Dorsolateral prefrontal cortex (tissue), 120 donors: ENCODE measurements at regions of chr1 and their contacts with region 1.

Region 1: DNA sequence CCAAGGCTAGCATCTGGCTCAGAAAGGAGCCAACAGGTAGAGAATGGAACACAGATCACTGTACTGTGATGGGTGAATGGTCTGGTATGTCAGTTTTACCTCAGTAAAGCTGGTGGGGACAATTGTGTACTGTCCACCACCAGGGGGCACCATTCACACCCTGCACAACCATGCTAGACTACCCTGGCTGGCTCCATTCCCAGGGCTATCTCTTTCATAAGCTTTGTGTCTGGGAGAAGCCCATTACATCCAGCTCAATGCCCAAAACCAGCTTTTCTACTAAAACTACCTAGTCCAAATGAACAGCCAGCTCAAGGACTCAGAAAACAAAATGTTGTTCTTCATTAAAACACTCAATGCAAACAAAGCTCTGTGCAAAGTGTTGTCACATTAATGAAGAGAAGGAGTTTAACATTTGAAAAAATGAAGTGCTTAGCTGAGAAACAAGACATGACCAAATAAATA is 62.0 kb upstream of the RASAL2 start:
- DNase-seq: peak; percentile 50 to 93 (median 82)
- H3K4me3 ChIP-seq: no peak overlapping the region
- H3K27ac ChIP-seq: peak overlapping the region in 7 of 59 donors; percentile 8 to 29 (median 21)
- H3K27me3 ChIP-seq: no peaks in the 10 kb centered on the region
- CTCF ChIP-seq: peak; percentile 74 to 94 (median 86)

Region 2: GRCh38 chr1:177729646-177730045 is 302.2 kb before region 1 on chr1:
- intact Hi-C with region 1: no loop called
- DNase-seq: no peak
- H3K4me3 ChIP-seq: no peak overlapping the region
- H3K27ac ChIP-seq: no peak overlapping the region
- H3K27me3 ChIP-seq: no peaks in the 10 kb centered on the region
- CTCF ChIP-seq: no peak

Region 3: DNA sequence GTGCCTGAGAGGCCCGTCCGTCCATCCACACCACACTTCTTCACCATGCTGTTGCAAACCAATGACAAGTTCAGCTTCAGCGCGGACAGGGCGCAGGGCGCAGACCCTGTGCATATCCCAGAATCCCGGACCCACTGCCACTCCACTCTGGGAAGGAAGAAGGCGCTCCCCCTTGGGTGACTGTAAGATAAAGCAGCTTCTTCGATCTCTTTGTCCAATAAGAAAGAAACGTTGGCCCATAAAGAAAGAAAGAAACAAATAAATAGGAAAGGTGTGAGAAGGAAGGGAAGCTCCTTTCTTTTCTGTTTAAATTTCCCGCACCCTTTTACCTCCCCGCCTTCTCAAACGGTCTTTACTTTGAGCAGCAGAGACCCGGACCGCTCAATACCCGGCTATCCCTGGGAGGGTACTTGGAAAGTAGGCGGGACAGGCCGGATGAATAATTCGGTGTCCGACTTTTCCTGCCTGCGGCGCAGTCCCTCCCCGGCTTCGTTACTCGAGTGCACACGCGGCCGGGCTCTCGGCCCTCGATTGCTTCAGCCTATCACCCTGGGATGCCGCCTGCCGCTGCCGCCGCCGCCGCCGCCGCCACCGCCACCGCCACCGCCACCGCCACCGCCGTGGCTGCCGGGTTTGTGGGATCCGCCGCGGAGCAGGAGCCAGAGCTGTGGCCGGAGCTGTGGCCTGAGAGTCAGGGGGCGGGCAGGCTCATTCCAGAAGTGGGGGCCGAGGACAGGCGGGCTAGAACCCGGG is 61.5 kb after region 1 on chr1:
- intact Hi-C with region 1: loop called (anchors 5 to 10 kb)
- DNase-seq: peak; percentile 79 to 95 (median 92)
- H3K4me3 ChIP-seq: peak overlapping the region; percentile 58 to 97 (median 88)
- H3K27ac ChIP-seq: peak overlapping the region; percentile 36 to 96 (median 90)
- H3K27me3 ChIP-seq: no peaks in the 10 kb centered on the region
- CTCF ChIP-seq: peak in 32 of 56 donors; percentile 3 to 49 (median 20)

Region 4: GRCh38 chr1:178168536-178168935 is 136.6 kb after region 1 on chr1:
- intact Hi-C with region 1: no loop called
- DNase-seq: peak in 1 of 10 donors; percentile 37
- H3K4me3 ChIP-seq: no peak overlapping the region
- H3K27ac ChIP-seq: no peak overlapping the region
- H3K27me3 ChIP-seq: no peaks in the 10 kb centered on the region
- CTCF ChIP-seq: no peak

Region 5: GRCh38 chr1:178189814-178190213 is 157.9 kb after region 1 on chr1:
- intact Hi-C with region 1: loop called in 1 of 2 experiments (anchors 5 kb)
- DNase-seq: peak in 1 of 10 donors; percentile 35
- H3K4me3 ChIP-seq: no peak overlapping the region
- H3K27ac ChIP-seq: no peak overlapping the region
- H3K27me3 ChIP-seq: no peaks in the 10 kb centered on the region
- CTCF ChIP-seq: peak; percentile 11 to 72 (median 48)

Region 6: GRCh38 chr1:178262120-178262500 is 230.2 kb after region 1 on chr1:
- intact Hi-C with region 1: no loop called
- DNase-seq: no peak
- H3K4me3 ChIP-seq: peak overlapping the region in 27 of 59 donors; percentile 3 to 60 (median 20)
- H3K27ac ChIP-seq: peak overlapping the region in 24 of 59 donors; percentile 2 to 72 (median 42)
- H3K27me3 ChIP-seq: no peaks in the 10 kb centered on the region
- CTCF ChIP-seq: no peak